ENCODE measurements at regions of chr18 and their contacts with region 1.

Region 1: DNA sequence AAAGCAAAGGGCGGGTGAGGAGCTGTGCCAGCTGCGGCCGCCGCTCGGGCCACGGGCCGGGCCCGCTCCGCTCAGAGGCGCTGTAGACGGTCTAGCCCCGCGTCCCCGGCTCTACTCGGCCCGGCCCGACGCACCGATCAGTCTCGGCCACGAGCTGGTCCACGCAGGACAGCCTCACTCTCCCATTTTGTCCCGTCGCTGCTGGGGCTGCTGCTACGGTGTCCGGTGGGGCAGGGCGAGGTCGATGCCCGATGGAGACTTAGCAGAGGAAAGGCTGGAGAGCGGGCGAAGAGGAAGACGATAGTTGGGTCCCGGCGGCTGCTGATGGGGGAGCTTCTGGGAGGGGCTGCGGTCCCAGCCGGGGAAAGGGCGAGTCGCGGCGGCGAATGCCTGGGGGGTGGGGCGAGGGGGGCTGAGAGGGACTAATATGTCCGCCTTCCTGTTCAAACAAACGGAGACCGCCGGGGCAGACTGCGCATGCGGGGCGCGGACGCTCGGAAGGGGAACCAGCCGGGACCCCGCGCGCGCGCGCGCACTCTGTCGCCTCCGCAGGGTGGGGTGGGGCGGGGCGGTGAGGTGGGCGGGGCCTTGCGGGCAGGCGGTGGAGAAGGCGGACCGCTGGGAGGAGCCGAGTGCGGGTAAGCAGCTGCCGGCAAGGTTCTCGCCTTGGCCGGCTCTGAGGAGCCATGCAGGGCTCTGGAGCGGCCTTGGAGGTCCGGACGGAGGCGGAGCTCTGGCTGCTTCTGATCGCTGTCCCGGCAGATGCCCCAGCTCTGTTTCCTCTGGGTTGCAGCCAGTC is at the start of gene ROCK1:
- DNase-seq: peak; percentile 95 to 98 (median 97)
- ATAC-seq: peak; percentile 93
- H3K4me3 ChIP-seq: peak within 1 kb of the TSS; percentile 94
- H3K4me3 Mint-ChIP-seq: peak within 1 kb of the TSS in 1 of 10 donors; percentile 98
- H3K27ac ChIP-seq: peak within 1 kb of the TSS; percentile 96
- H3K27ac Mint-ChIP-seq: peak within 1 kb of the TSS; percentile 87 to 97 (median 93)
- H3K4me1 ChIP-seq: peaks cover 31 to 34% of the 10 kb centered on the region in 2 donors
- H3K4me1 Mint-ChIP-seq: peaks cover 3 to 16% (median 7%) of the 10 kb centered on the region in 7 donors
- H3K27me3 ChIP-seq: no peaks in the 10 kb centered on the region
- H3K27me3 Mint-ChIP-seq: peaks cover 0 to 2% (median 0%) of the 10 kb centered on the region in 5 donors
- total RNA-seq, gene ROCK1: 66.2 to 97.5 (median 75.8) TPM

Region 2: GRCh38 chr18:20971886-20972267 is 139.7 kb before region 1 on chr18:
- CTCF ChIA-PET with region 1: no interaction called
- POLR2A ChIA-PET with region 1: no interaction called
- intact Hi-C with region 1: loop called in 1 of 2 experiments (anchors 5 kb)
- DNase-seq: peak in 4 of 9 donors; percentile 4 to 26 (median 12)
- ATAC-seq: peak; percentile 61
- H3K4me3 ChIP-seq: no peak overlapping the region
- H3K4me3 Mint-ChIP-seq: no peak overlapping the region
- H3K27ac ChIP-seq: no peak overlapping the region
- H3K27ac Mint-ChIP-seq: peak overlapping the region in 6 of 9 donors; percentile 2 to 23 (median 9)
- H3K4me1 ChIP-seq: no peaks in the 10 kb centered on the region
- H3K4me1 Mint-ChIP-seq: peaks cover 0 to 11% (median 4%) of the 10 kb centered on the region in 7 donors
- H3K27me3 ChIP-seq: no peaks in the 10 kb centered on the region
- H3K27me3 Mint-ChIP-seq: no peaks in the 10 kb centered on the region

Region 3: GRCh38 chr18:21038201-21038600 is 73.3 kb before region 1 on chr18:
- CTCF ChIA-PET with region 1: no interaction called
- POLR2A ChIA-PET with region 1: no interaction called
- intact Hi-C with region 1: no loop called
- DNase-seq: no peak
- ATAC-seq: no peak
- H3K4me3 ChIP-seq: no peak overlapping the region
- H3K4me3 Mint-ChIP-seq: no peak overlapping the region
- H3K27ac ChIP-seq: no peak overlapping the region
- H3K27ac Mint-ChIP-seq: peak overlapping the region in 4 of 9 donors; percentile 2 to 73 (median 30)
- H3K4me1 ChIP-seq: no peaks in the 10 kb centered on the region
- H3K4me1 Mint-ChIP-seq: peaks cover 0 to 15% (median 8%) of the 10 kb centered on the region in 7 donors
- H3K27me3 ChIP-seq: no peaks in the 10 kb centered on the region
- H3K27me3 Mint-ChIP-seq: no peaks in the 10 kb centered on the region

Region 4: DNA sequence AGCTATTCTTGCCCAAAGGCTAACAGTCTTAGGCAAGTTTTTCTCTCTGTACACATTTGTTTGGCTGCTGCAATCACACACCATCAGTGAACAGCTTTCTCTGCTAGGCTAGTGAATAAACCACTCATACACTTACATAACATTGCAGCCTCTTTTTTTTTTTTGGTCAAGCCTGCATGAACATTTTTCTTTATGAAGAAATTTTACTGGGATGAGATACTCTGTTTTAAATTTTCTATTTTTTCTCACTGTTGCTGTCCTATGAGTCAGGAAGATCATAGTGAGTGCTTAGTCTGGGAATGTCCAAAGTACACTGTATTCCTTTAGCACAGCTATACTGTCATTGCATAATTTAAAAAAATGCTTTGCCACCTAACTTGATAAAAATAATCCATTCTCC is 58.4 kb before region 1 on chr18:
- CTCF ChIA-PET with region 1: no interaction called
- POLR2A ChIA-PET with region 1: interaction called, 3 read pairs
- intact Hi-C with region 1: loop called (anchors 2 to 5 kb)
- DNase-seq: no peak
- ATAC-seq: no peak
- H3K4me3 ChIP-seq: no peak overlapping the region
- H3K4me3 Mint-ChIP-seq: no peak overlapping the region
- H3K27ac ChIP-seq: no peak overlapping the region
- H3K27ac Mint-ChIP-seq: peak overlapping the region in 4 of 9 donors; percentile 10 to 30 (median 24)
- H3K4me1 ChIP-seq: peaks cover 18 to 21% of the 10 kb centered on the region in 2 donors
- H3K4me1 Mint-ChIP-seq: peaks cover 5 to 55% (median 35%) of the 10 kb centered on the region in 7 donors
- H3K27me3 ChIP-seq: no peaks in the 10 kb centered on the region
- H3K27me3 Mint-ChIP-seq: no peaks in the 10 kb centered on the region

Region 5: GRCh38 chr18:21123290-21123926 is 11.9 kb after region 1 on chr18:
- CTCF ChIA-PET with region 1: no interaction called
- POLR2A ChIA-PET with region 1: interaction called, 11 read pairs
- intact Hi-C with region 1: no loop called
- DNase-seq: peak in 1 of 9 donors; percentile 8
- ATAC-seq: no peak
- H3K4me3 ChIP-seq: no peak overlapping the region
- H3K4me3 Mint-ChIP-seq: peak overlapping the region in 8 of 10 donors; percentile 0 to 61 (median 50)
- H3K27ac ChIP-seq: no peak overlapping the region
- H3K27ac Mint-ChIP-seq: peak overlapping the region in 7 of 9 donors; percentile 0 to 75 (median 15)
- H3K4me1 ChIP-seq: no peaks in the 10 kb centered on the region
- H3K4me1 Mint-ChIP-seq: peaks cover 4 to 13% (median 6%) of the 10 kb centered on the region in 7 donors
- H3K27me3 ChIP-seq: peaks cover 0 to 2% of the 10 kb centered on the region in 2 donors
- H3K27me3 Mint-ChIP-seq: peaks cover 0 to 7% (median 3%) of the 10 kb centered on the region in 5 donors

Region 6: DNA sequence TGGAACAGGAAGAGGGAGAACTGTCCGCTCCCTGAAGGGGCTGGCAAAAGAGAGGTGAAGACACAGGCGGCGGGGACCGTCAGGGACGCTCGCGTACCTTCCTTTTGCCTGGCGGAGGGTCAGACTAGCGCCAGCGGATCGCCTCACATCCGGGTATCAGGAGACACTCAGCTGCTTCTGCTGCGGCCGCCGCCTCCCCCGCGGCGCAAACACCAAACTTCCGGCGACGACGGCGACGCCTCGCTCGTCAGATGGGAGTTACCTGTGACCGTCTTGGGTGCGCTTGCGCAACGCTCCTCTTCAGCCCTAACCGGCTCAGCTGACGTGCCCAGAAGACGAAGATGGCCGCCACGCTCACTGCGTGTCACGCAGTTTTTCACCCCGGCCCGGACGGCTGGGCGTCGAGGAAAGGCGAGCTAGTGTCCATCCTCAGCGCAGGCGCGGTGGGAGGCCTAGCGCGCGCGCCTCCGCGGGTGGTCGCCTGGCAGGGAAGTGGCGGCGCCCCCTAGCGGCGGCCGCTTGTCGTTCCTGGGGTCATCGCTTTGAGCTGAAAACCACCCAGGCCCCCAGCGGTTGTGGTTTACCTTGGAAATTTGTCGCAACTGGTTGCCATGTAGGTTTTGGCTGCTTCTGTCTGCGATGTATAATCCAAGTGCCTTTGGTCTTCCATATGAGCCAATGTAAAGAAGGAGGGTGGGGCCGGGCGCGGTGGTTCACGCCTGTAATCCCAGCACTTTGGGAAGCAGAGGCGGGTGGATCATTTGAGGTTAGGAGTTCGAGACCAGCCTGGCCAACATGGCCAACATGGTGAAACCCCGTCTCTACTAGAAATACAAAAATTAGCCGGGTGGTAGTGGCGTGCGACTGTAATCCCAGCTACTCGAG is 489.2 kb after region 1 on chr18 and contains the start of gene ESCO1:
- CTCF ChIA-PET with region 1: no interaction called
- POLR2A ChIA-PET with region 1: interaction called, 7 read pairs
- intact Hi-C with region 1: loop called in 1 of 2 experiments (anchors 1 kb)
- DNase-seq: peak; percentile 88 to 97 (median 95)
- ATAC-seq: peak; percentile 90
- H3K4me3 ChIP-seq: peak within 1 kb of the TSS; percentile 99
- H3K4me3 Mint-ChIP-seq: peak within 1 kb of the TSS; percentile 91 to 99 (median 96)
- H3K27ac ChIP-seq: peak within 1 kb of the TSS; percentile 84
- H3K27ac Mint-ChIP-seq: peak within 1 kb of the TSS; percentile 96 to 100 (median 99)
- H3K4me1 ChIP-seq: peaks cover 12 to 24% of the 10 kb centered on the region in 2 donors
- H3K4me1 Mint-ChIP-seq: peaks cover 16 to 57% (median 36%) of the 10 kb centered on the region in 7 donors
- H3K27me3 ChIP-seq: no peaks in the 10 kb centered on the region
- H3K27me3 Mint-ChIP-seq: no peaks in the 10 kb centered on the region
- total RNA-seq, gene ESCO1: 25.9 to 36.4 (median 35.1) TPM

Region 7: DNA sequence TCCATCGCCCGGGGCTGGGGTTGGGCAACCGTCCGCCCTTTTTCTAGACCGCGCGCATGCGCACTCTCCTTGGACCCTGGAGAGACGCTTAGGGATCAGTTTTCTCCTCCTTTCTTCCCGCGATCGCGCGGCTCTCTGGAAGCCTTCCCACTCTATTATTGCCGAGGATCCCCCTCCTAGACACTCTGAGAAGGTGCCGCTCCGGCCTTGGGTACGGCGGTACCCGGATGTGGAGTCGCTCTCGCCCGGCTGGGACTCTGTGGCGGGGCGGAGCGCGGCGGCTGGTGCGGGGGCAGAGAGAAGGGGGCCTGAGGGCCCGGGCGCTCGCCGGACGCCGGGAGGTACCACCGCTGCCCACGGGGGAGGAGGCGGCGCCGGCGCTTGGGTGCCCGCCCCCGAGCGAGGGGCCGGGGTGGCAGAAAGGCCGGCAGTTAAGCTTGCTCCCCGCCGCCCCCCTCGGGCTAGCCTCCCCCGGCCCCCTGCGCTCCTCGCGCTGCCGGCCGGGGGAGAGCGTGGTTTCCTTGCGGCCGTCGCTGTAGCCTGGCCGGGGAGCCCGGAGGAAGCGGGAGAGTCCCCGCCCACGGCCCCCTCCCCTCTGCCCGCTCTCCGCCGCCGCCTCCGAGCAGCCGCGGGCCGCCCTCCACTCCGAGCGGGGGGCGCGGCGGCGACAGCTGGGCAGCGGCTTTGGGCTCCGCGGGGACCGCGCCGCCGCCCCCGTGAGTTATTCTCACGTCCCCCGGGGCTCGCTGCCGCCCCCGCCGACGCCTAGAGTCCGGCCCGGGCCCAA is 629.4 kb after region 1 on chr18 and contains the start of gene MIB1:
- CTCF ChIA-PET with region 1: no interaction called
- POLR2A ChIA-PET with region 1: no interaction called
- intact Hi-C with region 1: loop called in 1 of 2 experiments (anchors 1 kb)
- DNase-seq: peak in 8 of 9 donors; percentile 42 to 99 (median 99)
- ATAC-seq: peak; percentile 69
- H3K4me3 ChIP-seq: peak within 1 kb of the TSS; percentile 77
- H3K4me3 Mint-ChIP-seq: peak within 1 kb of the TSS; percentile 83 to 96 (median 94)
- H3K27ac ChIP-seq: peak within 1 kb of the TSS; percentile 83
- H3K27ac Mint-ChIP-seq: peak within 1 kb of the TSS; percentile 78 to 97 (median 94)
- H3K4me1 ChIP-seq: peaks cover 9 to 13% of the 10 kb centered on the region in 2 donors
- H3K4me1 Mint-ChIP-seq: peaks cover 21 to 58% (median 43%) of the 10 kb centered on the region in 7 donors
- H3K27me3 ChIP-seq: no peaks in the 10 kb centered on the region
- H3K27me3 Mint-ChIP-seq: peaks cover 0 to 18% (median 0%) of the 10 kb centered on the region in 5 donors
- total RNA-seq, gene MIB1: 16.0 to 35.2 (median 19.8) TPM